PC-9 (cell line): ENCODE measurements at regions of chr6 and their contacts with region 1.

Region 1: DNA sequence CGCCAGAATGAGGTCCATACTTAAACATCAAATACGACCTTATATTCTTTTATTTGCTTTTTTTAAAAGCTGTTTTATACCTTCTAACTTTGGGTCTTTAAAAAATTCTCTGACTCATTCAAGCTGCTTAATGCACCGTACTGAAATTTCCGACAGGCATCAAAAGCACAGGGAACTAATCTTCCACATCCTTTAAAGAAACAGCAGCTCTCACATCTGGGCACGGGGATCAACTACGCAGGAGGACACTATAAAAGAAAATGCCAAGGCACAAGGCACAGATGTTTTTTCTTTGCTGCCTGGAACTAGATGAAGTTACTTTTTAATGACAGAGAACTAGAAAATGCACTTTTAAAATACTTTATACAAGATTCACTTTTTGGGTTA is 112.4 kb upstream of the ARG1 start:
- DNase-seq: no peak
- H3K4me3 ChIP-seq: no peak overlapping the region
- H3K27ac ChIP-seq: no peak overlapping the region
- H3K4me1 ChIP-seq: no peaks in the 10 kb centered on the region
- H3K27me3 ChIP-seq: no peaks in the 10 kb centered on the region
- CTCF ChIP-seq: no peak

Region 2: DNA sequence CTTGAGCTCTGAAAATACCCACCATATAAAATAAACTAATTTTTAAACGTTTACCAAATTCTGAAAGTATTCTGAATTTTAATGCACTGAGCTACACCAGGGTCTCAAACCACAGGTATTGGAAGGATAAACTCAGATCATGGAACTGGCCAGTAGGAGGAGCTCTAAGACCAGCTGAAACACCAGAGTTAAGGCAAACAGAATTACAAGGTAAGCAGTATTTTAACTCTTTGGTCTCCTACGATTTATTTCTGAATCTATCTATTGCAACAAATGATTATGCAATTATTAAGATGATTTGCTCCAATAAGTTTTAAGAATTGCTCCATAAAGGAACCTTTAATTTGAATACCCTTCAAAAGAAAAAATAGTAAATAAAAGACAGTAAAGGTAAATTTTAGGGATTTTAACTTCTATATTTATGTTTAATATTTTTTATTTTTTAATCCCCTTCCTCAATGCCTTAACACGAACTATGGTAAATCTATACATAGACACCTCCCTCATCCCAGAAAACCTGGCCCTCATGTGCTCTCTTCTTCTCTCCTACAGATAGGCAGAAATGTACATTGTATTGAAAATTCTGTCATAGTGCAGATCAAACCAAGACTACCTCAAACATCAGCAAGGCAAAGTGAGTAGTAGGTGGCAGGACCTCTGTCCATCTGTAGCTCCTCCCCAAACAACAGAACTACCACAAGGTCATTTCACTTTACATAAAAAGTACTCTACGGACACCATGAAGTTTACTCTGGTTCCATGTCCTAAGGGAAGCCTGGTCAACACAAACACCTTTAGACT is 575.0 kb before region 1 on chr6:
- CTCF ChIA-PET with region 1: no interaction called
- POLR2A ChIA-PET with region 1: no interaction called
- intact Hi-C with region 1: loop called (anchors 5 kb)
- DNase-seq: peak; percentile 61 to 67
- H3K4me3 ChIP-seq: no peak overlapping the region
- H3K27ac ChIP-seq: no peak overlapping the region
- H3K4me1 ChIP-seq: no peaks in the 10 kb centered on the region
- H3K27me3 ChIP-seq: no peaks in the 10 kb centered on the region
- CTCF ChIP-seq: peak; percentile 98

Region 3: DNA sequence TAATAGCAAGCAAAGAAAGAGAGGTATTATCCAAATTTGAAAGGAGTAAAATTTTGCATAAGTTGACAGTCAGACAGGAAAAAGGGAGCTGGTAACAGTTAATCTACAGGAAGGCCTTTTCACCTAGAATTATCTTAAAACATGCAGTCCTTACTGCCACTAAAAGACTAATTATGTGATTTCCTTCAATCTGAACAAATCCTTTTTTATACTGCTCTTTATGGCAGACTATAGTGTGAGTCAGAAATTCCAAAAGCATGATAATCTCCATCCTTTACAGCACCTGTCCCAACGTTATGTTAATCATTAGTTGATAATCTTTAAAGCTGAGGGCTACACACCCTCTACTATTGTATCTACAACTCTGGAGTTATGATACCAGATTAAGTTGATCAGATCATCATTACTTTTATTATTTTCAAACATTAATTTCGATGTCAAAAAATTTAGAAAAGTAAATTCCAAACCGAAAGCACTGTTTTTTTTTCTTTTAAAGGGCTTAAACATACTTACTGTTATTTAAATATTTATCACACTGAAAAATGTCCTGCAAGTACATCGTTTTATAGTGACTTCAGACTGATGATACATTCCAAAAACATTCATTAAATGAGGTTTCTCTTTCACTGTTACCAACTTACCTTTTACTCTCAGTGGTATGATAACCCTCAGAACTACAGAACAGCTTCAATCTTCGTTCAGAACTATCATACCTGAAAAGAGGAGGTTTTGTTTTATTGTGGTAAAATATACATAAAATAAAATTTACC is 358.5 kb before region 1 on chr6:
- CTCF ChIA-PET with region 1: no interaction called
- POLR2A ChIA-PET with region 1: no interaction called
- intact Hi-C with region 1: no loop called
- DNase-seq: peak in 1 of 2 experiments; percentile 43
- H3K4me3 ChIP-seq: no peak overlapping the region
- H3K27ac ChIP-seq: no peak overlapping the region
- H3K4me1 ChIP-seq: peaks cover 18% of the 10 kb centered on the region
- H3K27me3 ChIP-seq: no peaks in the 10 kb centered on the region
- CTCF ChIP-seq: no peak

Region 4: DNA sequence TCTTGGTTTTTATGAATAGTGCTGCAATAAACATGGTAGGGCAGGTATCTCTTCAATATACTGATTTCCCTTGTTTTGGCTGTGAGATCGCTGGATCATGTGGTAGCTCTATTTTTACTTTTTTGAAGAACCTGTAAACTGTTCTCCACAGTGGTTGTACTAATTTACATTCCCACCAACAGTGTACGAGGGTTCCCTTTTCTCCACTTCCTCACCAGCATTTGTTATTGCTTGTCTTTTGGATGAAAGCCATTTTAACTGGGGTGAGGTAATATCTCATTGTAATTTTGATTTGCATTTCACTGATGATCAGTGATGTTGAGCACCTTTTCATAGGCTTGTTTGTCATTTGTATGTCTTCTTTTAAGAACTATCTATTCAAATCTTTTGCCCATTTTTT is 104.4 kb after region 1 on chr6:
- CTCF ChIA-PET with region 1: no interaction called
- POLR2A ChIA-PET with region 1: no interaction called
- intact Hi-C with region 1: no loop called
- DNase-seq: no peak
- H3K4me3 ChIP-seq: no peak overlapping the region
- H3K27ac ChIP-seq: no peak overlapping the region
- H3K4me1 ChIP-seq: no peaks in the 10 kb centered on the region
- H3K27me3 ChIP-seq: no peaks in the 10 kb centered on the region
- CTCF ChIP-seq: no peak